ENCODE measurements at regions of chr19 and their contacts with region 1.

Region 1: GRCh38 chr19:53195265-53195903 is 2.2 kb upstream of the ZNF665 start:
- DNase-seq: peak; percentile 63 to 74 (median 72)
- H3K4me3 ChIP-seq: no peak overlapping the region
- H3K4me3 Mint-ChIP-seq: peak overlapping the region in 1 of 2 donors; percentile 20
- H3K27ac ChIP-seq: no peak overlapping the region
- H3K27ac Mint-ChIP-seq: no peak overlapping the region
- H3K4me1 ChIP-seq: peaks cover 22 to 23% of the 10 kb centered on the region in 2 donors
- H3K4me1 Mint-ChIP-seq: peaks cover 23% of the 10 kb centered on the region
- H3K27me3 ChIP-seq: no peaks in the 10 kb centered on the region
- H3K27me3 Mint-ChIP-seq: peaks cover 3 to 11% (median 4%) of the 10 kb centered on the region in 3 donors
- CTCF ChIP-seq: peak; percentile 88

Region 2: DNA sequence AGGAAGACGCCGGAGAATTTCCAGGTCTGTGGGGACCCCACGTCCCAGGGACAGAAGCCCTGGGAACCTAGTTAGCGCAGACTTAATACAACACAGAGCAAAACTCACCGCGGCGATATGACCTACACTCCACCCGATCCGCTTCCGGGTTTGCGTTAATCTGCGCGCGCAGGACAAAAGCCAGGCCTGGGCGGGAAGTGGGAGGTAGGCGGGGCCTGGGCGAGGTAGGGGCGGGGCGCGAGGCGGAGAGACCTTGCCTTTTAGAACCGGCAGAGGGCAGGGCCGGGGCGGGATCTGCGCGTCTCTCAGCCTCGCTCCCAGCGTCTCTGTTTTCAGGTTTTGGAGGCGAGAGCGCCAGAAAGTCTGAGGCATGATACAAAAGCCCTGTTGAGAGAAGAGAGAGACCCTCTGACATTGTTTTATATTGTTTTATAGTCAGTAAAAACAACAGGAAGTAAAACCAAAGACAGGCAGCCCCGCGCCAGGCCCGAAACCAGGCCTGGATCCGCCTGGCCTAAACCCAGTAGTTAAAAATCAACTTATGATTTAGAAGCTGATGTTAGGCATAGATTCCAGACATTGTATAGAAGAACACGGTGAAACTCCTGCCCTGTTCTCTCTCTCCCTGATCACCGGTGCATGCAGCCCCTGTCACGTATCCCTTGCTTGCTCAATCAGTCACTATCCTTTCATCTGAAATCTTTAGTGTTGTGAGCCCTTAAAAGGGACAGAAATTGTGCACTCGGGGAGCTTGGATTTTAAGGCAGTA is 460.3 kb before region 1 on chr19 and contains the start of gene ZNF611:
- intact Hi-C with region 1: loop called in 1 of 2 experiments (anchors 10 kb)
- DNase-seq: peak; percentile 91 to 94 (median 93)
- H3K4me3 ChIP-seq: peak within 1 kb of the TSS; percentile 83 to 97 (median 94)
- H3K4me3 Mint-ChIP-seq: peak within 1 kb of the TSS; percentile 85 to 94
- H3K27ac ChIP-seq: peak within 1 kb of the TSS; percentile 80 to 93
- H3K27ac Mint-ChIP-seq: peak within 1 kb of the TSS; percentile 88 to 97 (median 94)
- H3K4me1 ChIP-seq: peaks cover 11 to 19% of the 10 kb centered on the region in 2 donors
- H3K4me1 Mint-ChIP-seq: peaks cover 21% of the 10 kb centered on the region
- H3K27me3 ChIP-seq: no peaks in the 10 kb centered on the region
- H3K27me3 Mint-ChIP-seq: peaks cover 0 to 3% (median 0%) of the 10 kb centered on the region in 3 donors
- CTCF ChIP-seq: peak; percentile 77
- polyA plus RNA-seq, gene ZNF611: 5.5 to 20.2 (median 12.0) TPM

Region 3: GRCh38 chr19:52962394-52963246 is 232.8 kb before region 1 on chr19 and contains the start of gene ZNF816:
- intact Hi-C with region 1: loop called in 1 of 2 experiments (anchors 5 kb)
- DNase-seq: peak; percentile 91 to 93 (median 92)
- H3K4me3 ChIP-seq: peak within 1 kb of the TSS; percentile 62 to 82 (median 72)
- H3K4me3 Mint-ChIP-seq: peak within 1 kb of the TSS; percentile 98 to 99
- H3K27ac ChIP-seq: peak within 1 kb of the TSS; percentile 54 to 85
- H3K27ac Mint-ChIP-seq: peak within 1 kb of the TSS; percentile 83 to 93 (median 90)
- H3K4me1 ChIP-seq: peaks cover 14 to 17% of the 10 kb centered on the region in 2 donors
- H3K4me1 Mint-ChIP-seq: peaks cover 22% of the 10 kb centered on the region
- H3K27me3 ChIP-seq: no peaks in the 10 kb centered on the region
- H3K27me3 Mint-ChIP-seq: no peaks in the 10 kb centered on the region
- CTCF ChIP-seq: no peak
- polyA plus RNA-seq, gene ZNF816: 1.4 to 4.3 (median 2.0) TPM

Region 4: GRCh38 chr19:53132141-53132991 is 63.0 kb before region 1 on chr19 and contains the start of gene ZNF415:
- intact Hi-C with region 1: no loop called
- DNase-seq: peak; percentile 3 to 26 (median 20)
- H3K4me3 ChIP-seq: peak within 1 kb of the TSS; percentile 32 to 69 (median 33)
- H3K4me3 Mint-ChIP-seq: peak within 1 kb of the TSS; percentile 74 to 92
- H3K27ac ChIP-seq: no peak within 1 kb of the TSS
- H3K27ac Mint-ChIP-seq: no peak within 1 kb of the TSS
- H3K4me1 ChIP-seq: peaks cover 11 to 12% of the 10 kb centered on the region in 2 donors
- H3K4me1 Mint-ChIP-seq: peaks cover 18% of the 10 kb centered on the region
- H3K27me3 ChIP-seq: peaks cover 0 to 21% of the 10 kb centered on the region in 2 donors
- H3K27me3 Mint-ChIP-seq: peaks cover 17 to 31% (median 27%) of the 10 kb centered on the region in 3 donors
- CTCF ChIP-seq: no peak
- polyA plus RNA-seq, gene ZNF415: 0.11 to 0.17 TPM in 2 of 3 donors, not detected in the other

Region 5: GRCh38 chr19:53158119-53158656 is 37.2 kb before region 1 on chr19:
- intact Hi-C with region 1: loop called (anchors 1 to 5 kb)
- DNase-seq: peak; percentile 0 to 11 (median 5)
- H3K4me3 ChIP-seq: peak overlapping the region; percentile 61 to 82 (median 68)
- H3K4me3 Mint-ChIP-seq: peak overlapping the region; percentile 89 to 91
- H3K27ac ChIP-seq: peak overlapping the region in 1 of 2 donors; percentile 36
- H3K27ac Mint-ChIP-seq: peak overlapping the region; percentile 6 to 85 (median 57)
- H3K4me1 ChIP-seq: peaks cover 14 to 22% of the 10 kb centered on the region in 2 donors
- H3K4me1 Mint-ChIP-seq: peaks cover 20% of the 10 kb centered on the region
- H3K27me3 ChIP-seq: no peaks in the 10 kb centered on the region
- H3K27me3 Mint-ChIP-seq: peaks cover 4 to 6% (median 5%) of the 10 kb centered on the region in 3 donors
- CTCF ChIP-seq: no peak

Region 6: GRCh38 chr19:53394974-53395839 is 199.8 kb after region 1 on chr19 and contains the start of gene ZNF765:
- intact Hi-C with region 1: loop called (anchors 10 kb)
- DNase-seq: peak; percentile 88 to 91 (median 90)
- H3K4me3 ChIP-seq: peak within 1 kb of the TSS; percentile 80 to 94 (median 81)
- H3K4me3 Mint-ChIP-seq: peak within 1 kb of the TSS; percentile 96 to 99
- H3K27ac ChIP-seq: peak within 1 kb of the TSS; percentile 53 to 81
- H3K27ac Mint-ChIP-seq: peak within 1 kb of the TSS; percentile 88 to 93 (median 90)
- H3K4me1 ChIP-seq: peaks cover 13 to 19% of the 10 kb centered on the region in 2 donors
- H3K4me1 Mint-ChIP-seq: peaks cover 21% of the 10 kb centered on the region
- H3K27me3 ChIP-seq: no peaks in the 10 kb centered on the region
- H3K27me3 Mint-ChIP-seq: peaks cover 0 to 4% (median 1%) of the 10 kb centered on the region in 3 donors
- CTCF ChIP-seq: peak; percentile 64
- polyA plus RNA-seq, gene ZNF765: 1.5 to 5.0 (median 3.4) TPM

Region 7: GRCh38 chr19:53511933-53512374 is 316.6 kb after region 1 on chr19:
- intact Hi-C with region 1: loop called in 1 of 2 experiments (anchors 10 kb)
- DNase-seq: peak; percentile 44 to 58 (median 49)
- H3K4me3 ChIP-seq: no peak overlapping the region
- H3K4me3 Mint-ChIP-seq: no peak overlapping the region
- H3K27ac ChIP-seq: no peak overlapping the region
- H3K27ac Mint-ChIP-seq: no peak overlapping the region
- H3K4me1 ChIP-seq: no peaks in the 10 kb centered on the region
- H3K4me1 Mint-ChIP-seq: no peaks in the 10 kb centered on the region
- H3K27me3 ChIP-seq: peaks cover 0 to 2% of the 10 kb centered on the region in 2 donors
- H3K27me3 Mint-ChIP-seq: peaks cover 0 to 6% (median 4%) of the 10 kb centered on the region in 3 donors
- CTCF ChIP-seq: peak; percentile 76

Region 8: GRCh38 chr19:53977429-53977990 is 782.1 kb after region 1 on chr19:
- intact Hi-C with region 1: no loop called
- DNase-seq: peak; percentile 66 to 84 (median 77)
- H3K4me3 ChIP-seq: peak overlapping the region; percentile 14 to 66 (median 25)
- H3K4me3 Mint-ChIP-seq: peak overlapping the region; percentile 73 to 86
- H3K27ac ChIP-seq: no peak overlapping the region
- H3K27ac Mint-ChIP-seq: peak overlapping the region in 3 of 7 donors; percentile 52 to 82 (median 58)
- H3K4me1 ChIP-seq: peaks cover 32 to 44% of the 10 kb centered on the region in 2 donors
- H3K4me1 Mint-ChIP-seq: peaks cover 36% of the 10 kb centered on the region
- H3K27me3 ChIP-seq: peaks cover 10 to 55% of the 10 kb centered on the region in 2 donors
- H3K27me3 Mint-ChIP-seq: peaks cover 58 to 74% (median 71%) of the 10 kb centered on the region in 3 donors
- CTCF ChIP-seq: no peak

Measured in CD14-positive monocyte (primary cell).